ENCODE measurements at regions of chr13 and their contacts with region 1.

Region 1: DNA sequence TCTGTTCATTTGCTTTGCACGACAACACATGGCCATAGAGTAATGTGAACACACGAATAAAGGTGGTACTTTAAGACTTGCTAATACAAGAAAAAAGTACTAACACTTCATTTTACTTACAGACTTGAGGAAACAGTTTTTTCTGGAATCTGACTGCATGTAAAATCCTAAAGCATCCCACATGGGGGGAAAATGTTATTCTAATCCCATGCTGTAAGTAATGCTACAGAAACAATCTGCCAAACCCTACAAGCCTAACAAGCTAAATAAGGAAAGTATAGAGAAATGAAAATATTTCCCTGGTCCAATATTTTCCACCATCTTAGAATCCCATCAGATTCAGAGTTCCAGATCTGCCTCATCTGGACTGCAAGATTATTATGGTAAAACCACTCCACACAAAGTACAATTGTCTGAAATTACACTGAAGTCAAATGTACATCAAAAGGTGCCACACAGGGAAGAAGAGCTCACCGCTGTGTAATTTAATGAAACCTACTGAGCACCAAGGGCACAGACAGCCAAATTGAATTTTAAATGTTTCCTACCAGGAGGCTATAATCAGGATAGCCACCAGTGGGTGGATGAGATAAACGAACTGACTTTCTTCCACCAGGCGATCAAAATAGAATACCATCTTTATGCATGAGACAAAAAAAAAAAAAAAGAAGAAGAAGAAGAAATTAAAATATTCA is 22.0 kb downstream of the LHFPL6 start:
- DNase-seq: no peak

Region 2: DNA sequence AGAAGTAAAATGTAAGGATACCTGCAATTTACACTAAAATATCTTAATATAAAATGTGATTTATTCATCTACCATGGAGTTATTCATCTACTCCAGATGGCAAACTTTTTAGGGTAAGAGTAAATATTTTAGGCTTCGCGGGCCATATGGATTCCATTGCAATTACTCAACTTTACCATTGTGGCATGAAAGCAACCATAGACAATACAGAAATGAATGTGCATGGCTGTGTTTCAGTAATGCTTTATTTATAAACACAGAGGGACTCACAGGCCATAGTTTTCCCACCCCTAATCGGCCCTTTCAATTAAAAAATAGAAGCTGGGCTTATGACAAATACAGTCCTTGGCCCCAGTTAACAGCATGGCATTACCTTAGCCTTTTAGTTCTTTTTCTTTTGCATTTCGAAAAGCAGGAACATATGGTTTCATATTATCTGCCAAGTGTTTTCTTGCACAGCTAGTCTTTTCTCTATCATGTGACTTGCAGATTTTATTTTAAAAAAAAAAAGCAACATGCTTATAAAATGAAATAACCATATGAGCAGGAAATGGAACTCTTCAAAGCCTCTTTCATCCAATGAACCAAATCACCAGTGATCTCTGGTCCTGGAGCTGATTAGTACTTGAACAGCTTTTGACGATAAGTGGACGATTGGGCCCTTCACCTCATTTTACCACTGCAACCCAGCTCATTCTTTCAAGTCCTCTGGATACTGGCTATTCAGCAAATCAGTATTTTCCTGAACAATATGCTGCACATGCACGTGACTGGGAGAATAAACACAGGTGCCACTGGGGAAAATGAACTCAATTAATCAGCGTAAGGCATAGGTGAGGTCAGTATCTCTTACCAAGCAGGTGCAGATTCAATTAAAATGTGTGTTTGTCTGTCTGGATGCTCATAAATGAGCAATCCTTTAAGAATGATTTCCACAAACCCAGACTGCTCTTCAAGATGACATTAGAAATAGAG is 41.9 kb before region 1 on chr13:
- intact Hi-C with region 1: loop called (anchors 5 kb)
- DNase-seq: no peak

Region 3: DNA sequence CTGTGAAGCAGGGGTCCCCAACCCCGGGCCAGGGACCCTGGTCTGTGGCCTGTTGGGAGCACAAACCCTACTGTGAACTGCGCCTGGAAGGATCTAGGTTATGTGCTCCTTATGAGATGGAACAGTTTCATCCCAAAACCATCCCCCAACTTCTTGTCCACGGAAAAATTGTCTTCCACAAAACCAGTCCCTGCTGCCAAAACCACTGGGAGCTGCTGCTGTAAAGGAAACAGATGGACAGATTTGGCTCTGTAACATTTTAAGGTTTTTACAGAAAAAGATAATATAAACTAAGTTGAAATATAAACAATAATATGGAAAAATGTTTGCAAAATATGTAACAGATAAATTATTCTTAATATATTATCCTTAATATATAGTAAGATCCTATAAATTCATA is 148.1 kb after region 1 on chr13:
- intact Hi-C with region 1: no loop called
- DNase-seq: no peak

Region 4: DNA sequence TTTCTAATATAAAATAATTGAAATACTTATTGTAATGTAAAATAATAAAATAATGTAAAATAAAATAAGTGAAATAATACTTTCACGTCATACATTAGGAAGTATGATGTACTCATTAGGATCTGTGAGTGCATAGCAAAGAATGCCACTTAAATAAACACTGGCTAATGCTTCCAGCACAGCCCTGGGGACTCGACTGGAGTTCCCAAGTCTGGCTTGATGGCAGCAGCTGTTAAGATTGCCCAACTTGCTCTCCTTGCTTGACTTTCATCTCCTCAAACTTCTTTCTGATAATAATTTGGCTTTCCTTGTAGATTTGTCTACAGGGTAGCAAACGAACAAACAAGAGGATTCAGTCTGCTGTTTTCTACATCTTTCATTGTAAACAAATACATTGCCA is 266.3 kb after region 1 on chr13:
- intact Hi-C with region 1: no loop called
- DNase-seq: no peak

Measured in cardiac septum (tissue), 1 donor.